Breast epithelium (tissue), 4 donors: ENCODE measurements at regions of chr12 and their contacts with region 1.

Region 1: DNA sequence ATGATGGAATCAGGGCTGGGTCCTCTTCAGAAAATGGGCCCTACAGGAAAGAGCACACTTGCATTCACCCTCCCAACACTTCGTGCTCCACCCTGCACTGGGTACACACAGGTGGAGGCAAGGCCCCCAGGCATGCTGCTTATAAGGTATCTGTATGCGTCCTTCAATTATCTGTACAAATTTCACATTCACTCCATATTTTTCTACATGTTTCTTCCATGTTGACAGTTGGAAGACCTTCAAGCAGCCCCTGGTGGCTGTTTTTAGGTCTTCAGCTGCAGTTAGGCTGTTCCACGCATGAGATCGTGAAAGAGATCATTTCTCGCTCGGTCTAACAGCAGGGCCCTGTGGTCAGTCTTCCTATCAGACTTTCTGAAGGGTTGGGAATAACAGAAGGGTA is 47.1 kb downstream of the PLXNC1 start:
- DNase-seq: no peak
- H3K4me3 ChIP-seq: no peak overlapping the region
- H3K27ac ChIP-seq: no peak overlapping the region
- H3K4me1 ChIP-seq: no peaks in the 10 kb centered on the region
- H3K27me3 ChIP-seq: no peaks in the 10 kb centered on the region
- CTCF ChIP-seq: no peak
- POLR2A ChIP-seq: no peak

Region 2: DNA sequence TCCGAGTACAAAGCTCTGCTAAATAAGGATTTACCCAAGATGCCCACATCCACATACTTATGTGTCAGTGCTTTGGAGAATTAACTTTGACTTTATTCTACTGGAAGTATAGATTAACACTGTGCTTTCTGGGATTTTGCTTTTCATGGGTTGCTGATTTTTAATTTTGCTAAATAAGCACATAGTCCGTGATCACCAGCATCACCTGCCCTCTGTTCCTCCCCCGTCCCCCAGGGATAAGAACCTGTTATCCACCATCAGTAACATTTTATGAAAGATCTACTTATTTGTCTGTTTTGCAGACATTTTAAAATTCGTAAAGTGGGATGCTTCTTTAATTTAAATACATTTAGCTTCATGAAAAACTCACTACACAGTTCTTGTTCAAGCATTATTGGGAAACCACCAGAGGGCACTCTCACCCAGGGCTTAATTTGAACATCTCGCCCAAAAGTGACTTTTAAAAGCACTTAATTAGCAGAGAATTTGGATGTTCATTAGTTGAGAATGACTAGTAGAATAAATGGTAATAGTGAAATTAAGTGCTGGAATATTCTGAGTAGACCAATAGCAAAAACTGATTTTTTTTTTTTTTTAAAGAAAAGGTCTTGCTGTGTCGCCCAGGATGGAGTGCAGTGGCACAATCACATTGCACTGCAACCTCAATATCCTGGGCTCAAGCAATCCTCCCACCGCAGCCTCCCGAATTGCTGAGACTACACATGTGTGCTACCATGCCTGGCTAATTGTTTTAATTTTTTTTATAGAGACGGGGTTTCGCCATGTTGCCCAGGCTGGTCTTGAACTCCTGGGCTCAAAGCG is 692.4 kb before region 1 on chr12:
- intact Hi-C with region 1: no loop called
- DNase-seq: no peak
- H3K4me3 ChIP-seq: no peak overlapping the region
- H3K27ac ChIP-seq: no peak overlapping the region
- H3K4me1 ChIP-seq: no peaks in the 10 kb centered on the region
- H3K27me3 ChIP-seq: no peaks in the 10 kb centered on the region
- CTCF ChIP-seq: peak; percentile 27 to 82 (median 81)
- POLR2A ChIP-seq: no peak

Region 3: DNA sequence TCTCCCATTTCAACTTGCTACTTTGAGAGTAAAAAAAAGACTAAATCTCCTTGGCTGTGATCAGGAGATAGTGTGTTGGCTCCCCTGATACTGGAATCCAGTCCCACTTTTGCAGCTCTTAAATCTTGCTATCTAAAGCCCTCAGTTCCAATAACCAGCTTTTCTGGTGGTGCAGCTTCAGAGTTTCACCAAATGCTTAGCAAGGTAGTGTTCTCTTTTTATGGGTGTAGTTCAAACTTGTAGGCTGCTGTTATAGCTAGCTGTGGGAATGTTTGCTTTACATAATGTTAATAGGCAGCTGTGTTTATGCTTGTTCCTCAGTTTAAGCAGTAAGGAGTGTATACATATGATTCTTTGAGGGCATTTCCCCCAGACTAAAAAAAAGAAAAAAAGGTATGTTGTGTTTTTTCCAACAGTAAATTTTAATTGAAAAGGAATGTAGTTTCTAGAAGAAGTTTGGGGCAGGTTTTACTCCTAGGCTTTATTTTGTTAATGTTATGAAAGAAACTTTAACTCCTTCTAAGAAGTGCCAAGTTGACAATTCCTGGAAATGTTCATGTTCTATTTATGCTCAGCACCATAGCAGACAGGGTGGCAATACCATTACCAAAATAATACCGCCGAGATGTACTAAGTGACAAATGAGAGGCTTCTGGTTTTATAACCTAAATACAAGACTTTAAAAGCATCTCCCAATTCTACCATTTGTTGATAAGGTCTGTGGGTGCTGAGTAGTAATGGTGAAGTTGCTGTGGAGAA is 506.2 kb before region 1 on chr12:
- intact Hi-C with region 1: no loop called
- DNase-seq: no peak
- H3K4me3 ChIP-seq: no peak overlapping the region
- H3K27ac ChIP-seq: no peak overlapping the region
- H3K4me1 ChIP-seq: no peaks in the 10 kb centered on the region
- H3K27me3 ChIP-seq: no peaks in the 10 kb centered on the region
- CTCF ChIP-seq: no peak
- POLR2A ChIP-seq: no peak

Region 4: GRCh38 chr12:94235848-94236247 is 40.4 kb after region 1 on chr12:
- intact Hi-C with region 1: loop called (anchors 1 kb)
- DNase-seq: no peak
- H3K4me3 ChIP-seq: no peak overlapping the region
- H3K27ac ChIP-seq: no peak overlapping the region
- H3K4me1 ChIP-seq: no peaks in the 10 kb centered on the region
- H3K27me3 ChIP-seq: no peaks in the 10 kb centered on the region
- CTCF ChIP-seq: no peak
- POLR2A ChIP-seq: no peak